ENCODE measurements at regions of chr1 and their contacts with region 1.

Region 1: DNA sequence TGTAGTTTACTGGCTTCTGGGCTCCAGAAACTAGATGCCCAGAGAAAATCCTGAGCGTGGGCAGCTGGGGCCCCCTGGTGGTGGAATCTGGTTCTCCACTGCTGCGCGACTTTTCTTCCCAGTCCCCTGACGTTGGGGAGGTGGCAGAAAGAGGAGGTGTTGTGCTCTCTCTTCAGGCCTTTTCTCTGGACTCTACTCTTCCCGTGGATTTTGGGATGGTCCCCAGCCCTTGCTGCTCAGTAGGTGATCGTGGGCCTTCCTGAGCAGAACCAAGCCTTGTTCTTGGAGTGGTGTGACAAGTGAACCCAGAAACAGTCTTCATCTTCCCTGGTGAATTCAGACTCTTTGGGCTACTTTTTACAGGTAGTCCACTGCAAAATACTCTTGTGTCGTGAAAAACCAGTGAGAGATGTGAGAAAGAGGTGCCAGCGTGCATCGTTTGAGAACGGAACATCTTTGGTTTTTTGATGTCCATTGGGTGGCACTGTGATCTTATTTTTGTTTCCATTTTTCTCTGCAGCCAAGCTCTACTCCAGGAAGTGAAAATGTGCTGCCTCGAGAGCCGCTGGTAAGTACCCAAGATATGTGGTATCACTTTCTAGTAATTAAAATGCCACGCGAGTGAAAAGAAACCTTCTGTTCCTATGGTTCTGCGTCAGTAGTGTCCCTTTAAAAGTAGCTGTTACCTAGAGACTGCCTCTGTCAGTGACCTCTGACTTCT is 20.2 kb downstream of the PEX14 start:
- DNase-seq: peak; percentile 87
- H3K4me3 Mint-ChIP-seq: peak overlapping the region; percentile 70
- H3K27ac Mint-ChIP-seq: peak overlapping the region; percentile 86
- H3K4me1 Mint-ChIP-seq: peaks cover 50% of the 10 kb centered on the region
- H3K27me3 Mint-ChIP-seq: no peaks in the 10 kb centered on the region

Region 2: GRCh38 chr1:10430216-10431069 is 64.5 kb before region 1 on chr1 and contains the start of gene CENPS:
- CTCF ChIA-PET with region 1: interaction called, 106 read pairs
- DNase-seq: peak; percentile 84
- H3K4me3 Mint-ChIP-seq: peak within 1 kb of the TSS; percentile 72
- H3K27ac Mint-ChIP-seq: peak within 1 kb of the TSS; percentile 88
- H3K4me1 Mint-ChIP-seq: peaks cover 33% of the 10 kb centered on the region
- H3K27me3 Mint-ChIP-seq: no peaks in the 10 kb centered on the region

Region 3: GRCh38 chr1:10472220-10473144 is 22.4 kb before region 1 on chr1 and contains the start of gene DFFA:
- CTCF ChIA-PET with region 1: interaction called, 10 read pairs
- DNase-seq: peak; percentile 97
- H3K4me3 Mint-ChIP-seq: peak within 1 kb of the TSS; percentile 77
- H3K27ac Mint-ChIP-seq: peak within 1 kb of the TSS; percentile 92
- H3K4me1 Mint-ChIP-seq: peaks cover 50% of the 10 kb centered on the region
- H3K27me3 Mint-ChIP-seq: no peaks in the 10 kb centered on the region

Region 4: GRCh38 chr1:10693497-10694273 is 198.8 kb after region 1 on chr1:
- CTCF ChIA-PET with region 1: interaction called, 15 read pairs
- DNase-seq: peak; percentile 68
- H3K4me3 Mint-ChIP-seq: peak overlapping the region; percentile 88
- H3K27ac Mint-ChIP-seq: peak overlapping the region; percentile 89
- H3K4me1 Mint-ChIP-seq: peaks cover 28% of the 10 kb centered on the region
- H3K27me3 Mint-ChIP-seq: peaks cover 32% of the 10 kb centered on the region

Region 5: DNA sequence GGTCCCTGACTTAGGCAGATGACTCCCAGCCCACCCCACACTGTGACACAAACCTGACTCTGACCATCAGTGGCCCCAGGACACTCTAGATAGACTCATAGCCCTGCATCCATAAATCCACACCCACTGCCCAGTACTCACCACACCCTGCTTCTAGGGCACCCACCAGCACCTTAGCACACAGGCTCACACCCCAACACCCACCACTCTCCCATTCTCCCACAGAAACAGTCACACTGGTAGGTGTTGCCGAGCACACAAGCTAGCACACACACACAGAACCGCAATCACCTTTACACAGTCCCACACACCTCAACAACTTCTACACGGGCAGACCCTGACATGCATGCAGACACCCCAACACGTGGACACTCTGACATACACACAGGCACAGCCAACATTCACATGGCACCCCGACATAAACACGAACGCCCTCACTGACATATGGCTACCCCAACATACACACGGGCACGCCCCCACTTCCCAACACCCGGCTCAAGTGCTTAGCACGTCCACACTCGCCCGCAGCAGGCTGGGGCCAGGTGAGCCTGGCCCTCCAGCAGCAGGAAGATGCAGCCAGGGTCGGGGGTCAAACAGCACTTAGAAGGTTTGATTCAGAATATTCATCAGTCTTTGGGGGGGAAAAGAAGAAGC is 412.1 kb after region 1 on chr1:
- CTCF ChIA-PET with region 1: interaction called, 10 read pairs
- DNase-seq: no peak
- H3K4me3 Mint-ChIP-seq: no peak overlapping the region
- H3K27ac Mint-ChIP-seq: no peak overlapping the region
- H3K4me1 Mint-ChIP-seq: peaks cover 18% of the 10 kb centered on the region
- H3K27me3 Mint-ChIP-seq: peaks cover 72% of the 10 kb centered on the region

Measured in activated naive CD4-positive, alpha-beta T cell treated with anti-CD3 and anti-CD28 coated beads, Interleukin-2, amount 10 ng/mL, durations not matched to agents 7 days and 5 days (primary cell).